Activated naive CD4-positive, alpha-beta T cell treated with anti-CD3 and anti-CD28 coated beads for 36 hours (primary cell): ENCODE measurements at regions of chr21 and their contacts with region 1.

Region 1: DNA sequence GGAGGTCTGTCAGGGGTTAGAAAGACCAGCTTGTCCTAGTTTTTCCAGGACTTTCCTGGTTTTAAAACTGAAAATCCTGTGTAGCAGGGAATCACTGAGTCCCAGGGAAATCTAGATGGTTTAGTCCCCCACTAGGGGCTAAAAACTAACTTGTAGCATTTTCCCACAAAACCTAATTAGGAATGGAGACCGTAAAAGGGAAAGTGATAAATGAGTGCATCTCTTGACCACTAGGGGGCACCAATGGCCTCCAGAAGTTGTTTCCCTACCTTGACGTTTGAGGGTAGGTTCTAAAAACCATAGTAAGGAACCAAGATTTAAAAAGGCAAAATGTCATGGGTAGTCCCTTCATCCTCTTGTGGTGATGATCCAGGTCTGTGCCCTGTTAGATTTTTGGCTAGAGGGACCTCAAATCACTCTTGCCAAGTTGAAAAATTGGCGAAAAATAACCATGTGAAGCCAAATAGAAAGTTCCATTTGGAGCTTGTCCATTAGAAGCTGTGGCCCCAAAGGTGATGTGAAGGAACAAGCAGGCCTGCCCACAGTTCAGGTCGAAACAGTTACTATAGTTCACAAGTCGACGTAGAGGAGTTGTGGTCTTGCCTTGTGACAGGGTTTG is 24.5 kb downstream of the CLIC6 start:
- DNase-seq: peak; percentile 69
- H3K4me3 Mint-ChIP-seq: no peak overlapping the region
- H3K27ac Mint-ChIP-seq: no peak overlapping the region
- H3K4me1 Mint-ChIP-seq: no peaks in the 10 kb centered on the region
- H3K27me3 Mint-ChIP-seq: peaks cover 13% of the 10 kb centered on the region

Region 2: DNA sequence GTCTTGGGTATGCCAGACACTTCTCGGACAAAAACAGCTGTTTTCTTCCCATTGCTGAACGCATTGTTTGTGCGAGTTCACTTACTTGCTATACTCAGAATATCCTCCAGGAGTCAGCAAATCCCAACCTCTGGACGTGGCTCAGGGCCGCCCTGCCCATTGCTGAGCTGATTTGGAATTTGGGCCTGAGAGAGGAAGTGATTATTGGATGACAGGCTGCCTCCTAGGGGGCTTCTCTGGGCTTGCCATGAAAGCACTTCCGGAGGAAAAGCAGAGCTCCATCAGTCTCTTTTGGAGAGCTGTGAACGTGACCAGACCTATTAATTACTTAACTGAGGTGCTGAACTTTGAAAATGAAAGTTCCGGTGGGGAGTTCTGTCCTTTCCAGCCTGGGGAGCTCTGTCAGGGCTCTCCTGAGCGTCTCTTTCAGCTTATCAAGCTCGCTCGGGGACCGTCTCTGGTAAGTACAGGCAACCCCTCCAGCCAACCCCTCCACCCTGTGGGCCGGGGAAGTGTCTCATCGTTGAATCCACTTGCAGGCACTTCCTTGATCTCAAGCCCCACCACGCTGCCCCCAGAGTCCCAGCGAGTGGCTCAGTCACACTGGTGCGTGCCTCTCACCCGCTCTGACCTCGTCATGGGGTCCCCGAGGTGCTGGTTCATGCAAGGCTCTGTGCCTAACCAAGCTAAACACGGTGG is 52.4 kb after region 1 on chr21:
- CTCF ChIA-PET with region 1: interaction called, 4 read pairs
- intact Hi-C with region 1: loop called (anchors 2 kb)
- DNase-seq: peak; percentile 74
- H3K4me3 Mint-ChIP-seq: peak overlapping the region; percentile 47
- H3K27ac Mint-ChIP-seq: peak overlapping the region; percentile 54
- H3K4me1 Mint-ChIP-seq: peaks cover 4% of the 10 kb centered on the region
- H3K27me3 Mint-ChIP-seq: no peaks in the 10 kb centered on the region

Region 3: DNA sequence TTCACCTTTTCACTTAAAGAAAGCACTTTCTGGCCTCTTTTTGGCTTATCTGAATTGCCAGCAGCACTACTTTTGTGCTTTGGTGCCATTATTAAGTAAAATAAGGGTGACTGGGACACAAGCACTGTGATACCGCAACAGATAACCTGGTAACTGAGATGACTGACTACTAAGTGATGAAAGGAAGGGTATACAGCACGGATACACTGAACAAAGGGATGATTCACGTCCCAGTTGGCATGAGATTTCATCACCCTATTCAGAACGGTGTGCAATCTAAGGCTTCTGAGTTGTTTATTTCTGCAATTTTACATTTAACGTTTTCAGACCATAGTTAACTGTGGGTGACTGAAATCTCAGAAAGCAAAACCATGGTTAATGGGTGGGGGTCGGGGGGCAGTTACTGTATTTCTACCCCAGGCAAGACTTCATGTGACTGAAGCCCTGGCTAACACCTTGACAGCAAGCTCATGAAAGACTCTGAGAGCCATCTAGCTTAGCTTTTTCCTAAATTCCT is 78.3 kb after region 1 on chr21:
- CTCF ChIA-PET with region 1: no interaction called
- intact Hi-C with region 1: no loop called
- DNase-seq: no peak
- H3K4me3 Mint-ChIP-seq: no peak overlapping the region
- H3K27ac Mint-ChIP-seq: no peak overlapping the region
- H3K4me1 Mint-ChIP-seq: no peaks in the 10 kb centered on the region
- H3K27me3 Mint-ChIP-seq: no peaks in the 10 kb centered on the region

Region 4: DNA sequence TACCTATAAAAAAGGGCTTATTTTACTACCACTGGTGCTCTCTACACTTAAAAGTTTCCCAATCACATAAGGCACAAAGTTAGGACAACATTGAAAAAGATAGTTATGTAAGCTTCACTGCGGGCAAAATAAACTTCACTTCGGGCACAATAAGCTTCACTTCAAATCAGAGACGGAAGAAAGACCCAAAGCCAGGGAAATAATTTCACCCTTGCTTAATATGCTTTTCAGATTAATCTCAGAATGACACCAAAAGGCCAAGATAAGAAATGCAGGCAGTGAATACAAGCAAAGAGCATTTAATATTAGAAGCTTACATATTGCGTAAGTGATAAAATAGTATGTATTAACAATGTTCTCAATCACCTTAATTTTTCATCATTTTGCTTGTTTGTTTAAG is 922.8 kb after region 1 on chr21:
- CTCF ChIA-PET with region 1: no interaction called
- intact Hi-C with region 1: loop called (anchors 1 kb)
- DNase-seq: no peak
- H3K4me3 Mint-ChIP-seq: no peak overlapping the region
- H3K27ac Mint-ChIP-seq: no peak overlapping the region
- H3K4me1 Mint-ChIP-seq: peaks cover 2% of the 10 kb centered on the region
- H3K27me3 Mint-ChIP-seq: no peaks in the 10 kb centered on the region

Region 5: DNA sequence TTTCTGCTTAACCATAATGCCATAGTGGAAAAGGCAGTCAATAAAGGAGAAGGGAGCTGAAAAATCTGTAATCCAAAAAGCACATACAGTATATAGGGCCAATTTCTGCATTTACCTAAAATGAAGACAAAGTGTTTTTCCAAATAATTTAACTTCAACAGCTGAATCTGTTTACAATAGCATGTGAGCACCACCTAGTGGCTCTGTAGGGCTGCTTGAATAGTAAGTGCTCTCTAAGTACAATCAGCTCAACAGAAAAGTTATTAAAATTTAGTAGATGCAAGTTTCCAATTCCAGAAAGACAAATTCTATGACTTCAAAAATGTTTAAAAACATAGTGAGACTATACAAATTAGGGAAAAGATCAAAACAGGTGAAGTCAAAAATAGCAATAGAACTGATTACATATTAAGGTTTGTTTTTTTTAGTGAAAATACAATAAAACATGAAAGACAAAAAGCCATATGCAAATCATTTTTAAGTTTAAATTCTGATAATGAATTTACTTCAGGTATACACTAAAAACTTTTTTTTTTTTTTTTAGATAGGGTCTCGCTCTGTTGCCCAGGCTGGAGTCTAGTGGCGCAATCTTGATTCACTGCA is 1147.0 kb after region 1 on chr21:
- CTCF ChIA-PET with region 1: interaction called, 30 read pairs
- intact Hi-C with region 1: loop called (anchors 1 kb)
- DNase-seq: peak; percentile 74
- H3K4me3 Mint-ChIP-seq: no peak overlapping the region
- H3K27ac Mint-ChIP-seq: no peak overlapping the region
- H3K4me1 Mint-ChIP-seq: peaks cover 3% of the 10 kb centered on the region
- H3K27me3 Mint-ChIP-seq: no peaks in the 10 kb centered on the region